B cell (primary cell): ENCODE measurements at regions of chr1 and their contacts with region 1.

Region 1: GRCh38 chr1:165827268-165828102 is at the start of gene UCK2:
- DNase-seq: peak; percentile 82
- ATAC-seq: peak; percentile 69
- H3K4me3 ChIP-seq: peak within 1 kb of the TSS; percentile 57 to 88 (median 83)
- H3K4me3 Mint-ChIP-seq: peak within 1 kb of the TSS; percentile 93
- H3K27ac ChIP-seq: peak within 1 kb of the TSS in 1 of 2 donors; percentile 77
- H3K27ac Mint-ChIP-seq: peak within 1 kb of the TSS; percentile 85
- H3K4me1 ChIP-seq: peaks cover 17 to 19% of the 10 kb centered on the region in 2 donors
- H3K4me1 Mint-ChIP-seq: peaks cover 22% of the 10 kb centered on the region
- H3K27me3 ChIP-seq: no peaks in the 10 kb centered on the region
- H3K27me3 Mint-ChIP-seq: no peaks in the 10 kb centered on the region
- CTCF ChIP-seq: no peak
- total RNA-seq, gene UCK2: 11.5 and 12.6 TPM in 2 replicates

Region 2: GRCh38 chr1:165630629-165631341 is 196.7 kb before region 1 on chr1 and contains the start of gene MGST3:
- CTCF ChIA-PET with region 1: no interaction called
- POLR2A ChIA-PET with region 1: no interaction called
- intact Hi-C with region 1: loop called (anchors 10 kb)
- DNase-seq: peak; percentile 95
- ATAC-seq: peak; percentile 94
- H3K4me3 ChIP-seq: peak within 1 kb of the TSS; percentile 74 to 93 (median 84)
- H3K4me3 Mint-ChIP-seq: no peak within 1 kb of the TSS
- H3K27ac ChIP-seq: peak within 1 kb of the TSS; percentile 72 to 83
- H3K27ac Mint-ChIP-seq: peak within 1 kb of the TSS; percentile 67
- H3K4me1 ChIP-seq: peaks cover 27 to 31% of the 10 kb centered on the region in 2 donors
- H3K4me1 Mint-ChIP-seq: peaks cover 31% of the 10 kb centered on the region
- H3K27me3 ChIP-seq: no peaks in the 10 kb centered on the region
- H3K27me3 Mint-ChIP-seq: no peaks in the 10 kb centered on the region
- CTCF ChIP-seq: no peak
- total RNA-seq, gene MGST3: 41.7 and 46.0 TPM in 2 replicates

Region 3: DNA sequence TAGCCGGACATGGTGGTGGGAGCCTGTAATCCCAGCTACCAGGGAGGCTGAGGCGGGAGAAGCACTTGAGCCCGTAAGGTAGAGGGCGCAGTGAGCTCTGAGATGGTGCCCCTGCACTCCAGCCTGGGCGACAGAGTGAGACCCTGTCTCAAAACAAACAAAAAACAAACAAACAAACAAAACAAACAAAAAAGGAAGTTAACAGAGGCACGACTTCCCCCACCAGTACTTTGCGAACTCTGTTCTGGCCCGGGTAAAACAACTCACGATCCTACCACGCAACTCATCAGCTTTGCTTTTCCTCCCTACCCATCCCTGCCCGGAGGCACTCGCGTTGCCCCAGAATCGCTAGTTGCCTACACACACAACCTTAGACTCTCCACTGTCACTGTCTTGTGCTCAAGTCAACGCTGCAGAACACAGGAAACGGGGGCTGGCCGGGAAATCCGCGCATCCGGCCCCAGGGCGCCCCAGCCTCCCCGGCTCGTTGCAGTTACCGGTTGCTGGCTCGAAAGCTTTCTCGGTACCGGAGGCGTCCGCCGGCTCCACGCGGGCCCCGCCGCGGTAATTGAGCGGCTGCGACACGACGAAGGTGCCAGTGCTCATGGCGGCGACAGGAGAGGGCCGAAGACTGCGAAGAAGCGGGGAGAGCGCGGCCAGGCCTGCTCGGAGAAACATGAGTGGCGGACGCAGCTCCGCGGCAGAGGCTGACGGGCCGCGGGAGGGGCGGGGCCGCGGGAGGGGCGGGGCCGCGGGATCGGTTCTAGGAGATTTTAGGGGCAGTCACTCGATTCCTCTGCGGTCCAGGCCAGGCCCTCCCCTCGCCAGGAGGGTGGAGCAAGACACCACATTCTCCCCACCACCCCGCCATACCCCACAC is 129.4 kb before region 1 on chr1 and contains the start of gene ALDH9A1:
- CTCF ChIA-PET with region 1: interaction called, 4 read pairs
- POLR2A ChIA-PET with region 1: no interaction called
- intact Hi-C with region 1: loop called (anchors 1 kb)
- DNase-seq: peak; percentile 89
- ATAC-seq: peak; percentile 89
- H3K4me3 ChIP-seq: peak within 1 kb of the TSS; percentile 73 to 96 (median 95)
- H3K4me3 Mint-ChIP-seq: peak within 1 kb of the TSS; percentile 92
- H3K27ac ChIP-seq: peak within 1 kb of the TSS; percentile 90 to 92
- H3K27ac Mint-ChIP-seq: peak within 1 kb of the TSS; percentile 91
- H3K4me1 ChIP-seq: peaks cover 15 to 18% of the 10 kb centered on the region in 2 donors
- H3K4me1 Mint-ChIP-seq: peaks cover 25% of the 10 kb centered on the region
- H3K27me3 ChIP-seq: peaks cover 0 to 4% (median 0%) of the 10 kb centered on the region in 4 experiments
- H3K27me3 Mint-ChIP-seq: peaks cover 3% of the 10 kb centered on the region
- CTCF ChIP-seq: peak; percentile 24
- total RNA-seq, gene ALDH9A1: 37.5 and 37.9 TPM in 2 replicates

Region 4: DNA sequence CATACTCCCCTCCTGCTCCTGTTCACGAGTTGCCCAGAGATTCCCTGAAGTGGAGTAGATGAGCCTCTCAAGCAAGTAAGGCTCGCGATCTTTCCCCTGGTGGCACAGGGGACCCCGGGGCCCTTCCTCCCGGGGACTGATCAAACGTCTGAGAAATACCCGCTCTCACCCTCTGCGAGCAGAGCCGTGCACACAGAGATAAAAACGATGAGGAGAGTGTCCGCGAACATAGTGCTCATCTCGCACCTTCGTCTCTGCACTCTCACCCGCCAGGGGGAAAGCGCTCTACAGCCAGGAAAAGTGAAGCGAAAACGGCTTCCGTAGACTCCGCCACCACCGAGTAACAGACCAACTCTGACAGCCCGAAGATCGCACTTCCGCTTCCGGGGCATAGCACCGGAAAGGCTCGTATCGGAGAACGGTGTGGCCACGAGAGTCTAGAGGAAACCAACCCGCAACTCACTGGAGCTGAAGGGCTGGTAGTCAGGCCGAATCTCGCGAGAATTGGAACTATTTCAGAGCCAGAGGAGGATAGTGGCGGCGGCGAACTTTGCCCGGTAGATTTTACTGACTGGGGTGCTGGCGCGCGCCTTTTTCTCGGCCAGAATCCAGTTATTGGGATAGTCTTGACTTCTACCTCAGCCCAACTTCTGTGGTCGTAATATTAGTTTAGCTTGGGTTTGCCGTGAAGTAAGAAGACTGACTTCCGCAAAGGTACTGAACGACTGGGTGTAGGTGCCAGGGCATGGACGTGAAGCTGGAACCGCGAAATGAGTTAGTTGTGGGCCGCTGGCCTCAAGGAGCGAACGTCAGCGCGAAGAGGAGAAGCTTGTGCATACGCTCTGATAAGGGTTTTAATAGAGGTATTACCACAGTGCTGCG is 58.7 kb before region 1 on chr1 and contains the start of gene TMCO1:
- CTCF ChIA-PET with region 1: interaction called, 8 read pairs
- POLR2A ChIA-PET with region 1: interaction called, 4 read pairs
- intact Hi-C with region 1: loop called (anchors 1 kb)
- DNase-seq: peak; percentile 97
- ATAC-seq: peak; percentile 95
- H3K4me3 ChIP-seq: peak within 1 kb of the TSS; percentile 73 to 92 (median 85)
- H3K4me3 Mint-ChIP-seq: peak within 1 kb of the TSS; percentile 98
- H3K27ac ChIP-seq: peak within 1 kb of the TSS; percentile 91 to 94
- H3K27ac Mint-ChIP-seq: peak within 1 kb of the TSS; percentile 97
- H3K4me1 ChIP-seq: peaks cover 20 to 23% of the 10 kb centered on the region in 2 donors
- H3K4me1 Mint-ChIP-seq: peaks cover 52% of the 10 kb centered on the region
- H3K27me3 ChIP-seq: no peaks in the 10 kb centered on the region
- H3K27me3 Mint-ChIP-seq: no peaks in the 10 kb centered on the region
- CTCF ChIP-seq: peak; percentile 23
- total RNA-seq, gene TMCO1: 34.8 and 39.5 TPM in 2 replicates

Region 5: DNA sequence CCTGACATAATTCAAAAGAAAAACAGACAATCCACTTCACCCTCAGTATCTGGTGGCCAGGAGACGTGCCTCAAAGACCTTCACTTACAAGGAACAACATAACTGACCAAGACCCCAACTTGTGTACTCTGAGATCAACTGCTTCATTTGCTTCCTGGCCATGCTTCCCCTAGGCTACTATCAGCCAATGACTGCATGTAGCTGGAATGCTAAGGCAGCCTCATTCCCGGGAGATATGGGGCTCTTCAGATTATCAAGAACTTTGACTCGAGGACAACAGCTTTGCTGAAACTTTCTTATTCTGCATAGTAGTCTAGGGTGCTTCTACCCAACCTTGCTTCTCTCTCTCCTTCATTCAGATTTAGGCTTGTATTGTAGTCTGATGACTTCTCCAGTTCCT is 11.8 kb before region 1 on chr1:
- CTCF ChIA-PET with region 1: no interaction called
- POLR2A ChIA-PET with region 1: no interaction called
- intact Hi-C with region 1: no loop called
- DNase-seq: no peak
- ATAC-seq: no peak
- H3K4me3 ChIP-seq: no peak overlapping the region
- H3K4me3 Mint-ChIP-seq: no peak overlapping the region
- H3K27ac ChIP-seq: no peak overlapping the region
- H3K27ac Mint-ChIP-seq: no peak overlapping the region
- H3K4me1 ChIP-seq: no peaks in the 10 kb centered on the region
- H3K4me1 Mint-ChIP-seq: no peaks in the 10 kb centered on the region
- H3K27me3 ChIP-seq: peaks cover 0 to 3% (median 0%) of the 10 kb centered on the region in 4 experiments
- H3K27me3 Mint-ChIP-seq: peaks cover 14% of the 10 kb centered on the region
- CTCF ChIP-seq: no peak

Region 6: DNA sequence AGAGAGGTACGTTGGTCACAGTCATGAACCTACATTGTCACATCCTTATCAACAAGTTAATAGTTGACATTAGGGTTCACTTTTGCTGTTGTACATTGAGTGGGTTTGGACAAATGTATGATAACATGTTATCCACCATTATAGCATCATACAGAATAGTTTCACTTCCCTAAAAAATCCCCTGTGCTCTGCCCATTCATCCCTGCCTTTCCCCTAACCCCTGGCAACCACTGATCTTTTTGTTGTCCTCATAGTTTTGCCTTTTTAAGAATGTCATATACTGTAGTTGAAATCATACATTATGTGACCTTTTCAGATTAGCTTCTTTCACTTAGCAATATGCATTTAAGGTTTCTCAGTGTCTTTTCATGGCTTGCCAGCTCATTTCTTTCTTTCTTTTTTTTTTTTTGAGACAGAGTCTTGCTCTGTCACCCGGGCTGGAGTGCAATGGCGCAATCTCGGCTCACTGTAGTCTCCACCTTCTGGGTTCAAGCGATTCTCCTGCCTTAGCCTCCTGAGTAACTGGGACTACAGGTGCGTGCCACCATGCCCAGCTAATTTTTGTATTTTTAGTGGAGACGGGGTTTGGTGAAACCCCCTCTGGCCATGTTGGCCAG is 50.6 kb after region 1 on chr1:
- CTCF ChIA-PET with region 1: no interaction called
- POLR2A ChIA-PET with region 1: no interaction called
- intact Hi-C with region 1: loop called (anchors 5 kb)
- DNase-seq: peak; percentile 56
- ATAC-seq: peak; percentile 65
- H3K4me3 ChIP-seq: no peak overlapping the region
- H3K4me3 Mint-ChIP-seq: no peak overlapping the region
- H3K27ac ChIP-seq: no peak overlapping the region
- H3K27ac Mint-ChIP-seq: peak overlapping the region; percentile 4
- H3K4me1 ChIP-seq: peaks cover 14 to 20% of the 10 kb centered on the region in 2 donors
- H3K4me1 Mint-ChIP-seq: peaks cover 36% of the 10 kb centered on the region
- H3K27me3 ChIP-seq: no peaks in the 10 kb centered on the region
- H3K27me3 Mint-ChIP-seq: no peaks in the 10 kb centered on the region
- CTCF ChIP-seq: no peak

Region 7: DNA sequence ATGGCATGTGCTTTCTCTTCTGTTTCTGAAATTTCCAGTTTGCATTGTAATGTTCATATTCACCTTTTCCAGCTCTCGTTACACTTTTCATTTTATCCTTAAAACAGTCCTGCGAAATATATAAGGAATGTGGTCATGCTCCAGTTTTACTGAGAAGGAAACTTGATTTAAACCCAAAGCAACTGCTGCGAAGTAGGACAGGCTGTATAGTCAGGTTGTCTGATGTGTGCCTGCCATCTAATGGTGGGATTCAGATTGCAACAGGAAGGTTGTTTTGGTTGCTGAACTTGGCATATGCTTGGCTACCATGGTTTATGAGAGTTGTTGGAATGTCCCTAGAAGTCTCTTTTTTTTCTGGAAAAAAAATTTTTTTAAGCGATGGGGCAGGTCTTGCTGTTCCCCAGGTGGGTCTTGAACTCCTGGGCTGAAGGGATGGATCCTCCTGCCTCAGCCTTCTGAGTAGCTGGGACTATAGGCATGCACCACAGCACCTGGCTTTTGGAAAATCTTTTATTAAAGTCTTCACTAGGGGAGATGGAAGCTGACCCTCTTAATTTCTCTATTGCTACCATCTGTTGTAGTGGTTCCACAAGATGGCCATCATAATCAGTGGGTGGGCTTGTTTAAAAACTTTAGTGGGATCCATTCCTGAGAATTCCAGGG is 86.8 kb after region 1 on chr1:
- CTCF ChIA-PET with region 1: interaction called, 5 read pairs
- POLR2A ChIA-PET with region 1: no interaction called
- intact Hi-C with region 1: loop called (anchors 10 kb)
- DNase-seq: peak; percentile 81
- ATAC-seq: peak; percentile 84
- H3K4me3 ChIP-seq: no peak overlapping the region
- H3K4me3 Mint-ChIP-seq: no peak overlapping the region
- H3K27ac ChIP-seq: no peak overlapping the region
- H3K27ac Mint-ChIP-seq: no peak overlapping the region
- H3K4me1 ChIP-seq: no peaks in the 10 kb centered on the region
- H3K4me1 Mint-ChIP-seq: peaks cover 2% of the 10 kb centered on the region
- H3K27me3 ChIP-seq: no peaks in the 10 kb centered on the region
- H3K27me3 Mint-ChIP-seq: no peaks in the 10 kb centered on the region
- CTCF ChIP-seq: peak; percentile 90

Region 8: GRCh38 chr1:166053395-166053794 is 225.9 kb after region 1 on chr1:
- CTCF ChIA-PET with region 1: no interaction called
- POLR2A ChIA-PET with region 1: no interaction called
- intact Hi-C with region 1: no loop called
- DNase-seq: no peak
- ATAC-seq: no peak
- H3K4me3 ChIP-seq: no peak overlapping the region
- H3K4me3 Mint-ChIP-seq: no peak overlapping the region
- H3K27ac ChIP-seq: no peak overlapping the region
- H3K27ac Mint-ChIP-seq: no peak overlapping the region
- H3K4me1 ChIP-seq: no peaks in the 10 kb centered on the region
- H3K4me1 Mint-ChIP-seq: no peaks in the 10 kb centered on the region
- H3K27me3 ChIP-seq: peaks cover 0 to 3% (median 0%) of the 10 kb centered on the region in 4 experiments
- H3K27me3 Mint-ChIP-seq: peaks cover 31% of the 10 kb centered on the region
- CTCF ChIP-seq: no peak

Region 9: GRCh38 chr1:166489670-166490436 is 662.4 kb after region 1 on chr1:
- CTCF ChIA-PET with region 1: no interaction called
- POLR2A ChIA-PET with region 1: no interaction called
- intact Hi-C with region 1: loop called (anchors 5 kb)
- DNase-seq: peak; percentile 76
- ATAC-seq: peak; percentile 81
- H3K4me3 ChIP-seq: peak overlapping the region; percentile 57 to 96 (median 83)
- H3K4me3 Mint-ChIP-seq: no peak overlapping the region
- H3K27ac ChIP-seq: peak overlapping the region; percentile 90 to 95
- H3K27ac Mint-ChIP-seq: no peak overlapping the region
- H3K4me1 ChIP-seq: peaks cover 14 to 19% of the 10 kb centered on the region in 2 donors
- H3K4me1 Mint-ChIP-seq: peaks cover 5% of the 10 kb centered on the region
- H3K27me3 ChIP-seq: no peaks in the 10 kb centered on the region
- H3K27me3 Mint-ChIP-seq: no peaks in the 10 kb centered on the region
- CTCF ChIP-seq: no peak

Region 10: GRCh38 chr1:166865931-166866330 is 1038.4 kb after region 1 on chr1:
- CTCF ChIA-PET with region 1: no interaction called
- POLR2A ChIA-PET with region 1: no interaction called
- intact Hi-C with region 1: no loop called
- DNase-seq: no peak
- ATAC-seq: no peak
- H3K4me3 ChIP-seq: no peak overlapping the region
- H3K4me3 Mint-ChIP-seq: no peak overlapping the region
- H3K27ac ChIP-seq: no peak overlapping the region
- H3K27ac Mint-ChIP-seq: no peak overlapping the region
- H3K4me1 ChIP-seq: no peaks in the 10 kb centered on the region
- H3K4me1 Mint-ChIP-seq: no peaks in the 10 kb centered on the region
- H3K27me3 ChIP-seq: no peaks in the 10 kb centered on the region
- H3K27me3 Mint-ChIP-seq: no peaks in the 10 kb centered on the region
- CTCF ChIP-seq: no peak